ENCODE measurements at regions of chr3 and their contacts with region 1.

Region 1: DNA sequence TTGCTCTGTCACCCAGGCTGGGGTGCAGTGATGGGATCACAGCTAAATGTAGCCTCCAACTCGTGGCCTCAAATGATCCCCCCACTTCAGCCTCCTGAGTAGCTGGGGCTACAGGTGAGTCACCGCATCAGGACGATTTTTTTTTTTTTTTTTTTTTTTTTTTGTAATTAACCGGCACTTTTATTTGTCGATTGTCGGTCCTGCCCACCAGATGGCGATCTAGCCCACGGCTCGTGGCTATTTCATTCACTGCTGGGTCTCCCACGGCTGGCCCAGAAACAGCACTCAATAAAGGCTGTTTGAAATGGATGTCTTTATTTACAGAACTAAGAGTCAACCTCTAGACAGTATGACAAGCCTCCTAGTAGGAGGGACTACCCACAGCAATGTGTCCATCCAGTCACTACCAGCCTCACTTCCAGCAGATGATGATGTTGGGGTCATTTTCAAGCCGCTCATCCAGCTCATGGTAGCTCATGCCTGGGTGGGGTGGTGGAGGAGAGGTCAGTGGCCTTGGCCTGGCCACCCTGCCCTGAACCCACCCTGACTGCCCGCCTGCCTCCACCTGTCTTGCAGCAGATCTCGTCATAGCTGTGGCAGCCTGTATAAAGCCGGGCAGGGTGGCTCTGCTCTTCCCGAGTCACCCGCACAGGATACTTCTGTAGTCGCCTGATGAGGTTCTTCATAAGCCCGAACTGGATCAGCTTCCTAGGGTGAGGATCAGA is 1.8 kb upstream of the ZMYND10 start:
- DNase-seq: peak; percentile 71
- ATAC-seq: 0 out of 2 replicates have a peak, but pooled peaks have one; percentile 8
- H3K4me3 ChIP-seq: no peak overlapping the region
- H3K27ac ChIP-seq: no peak overlapping the region
- H3K4me1 ChIP-seq: peaks cover 11% of the 10 kb centered on the region
- H3K27me3 ChIP-seq: no peaks in the 10 kb centered on the region
- CTCF ChIP-seq: peak; percentile 79
- POLR2A ChIP-seq: 0 out of 2 replicates have a peak, but pooled peaks have one; percentile 43
- RAD21 ChIP-seq: peak; percentile 85

Region 2: DNA sequence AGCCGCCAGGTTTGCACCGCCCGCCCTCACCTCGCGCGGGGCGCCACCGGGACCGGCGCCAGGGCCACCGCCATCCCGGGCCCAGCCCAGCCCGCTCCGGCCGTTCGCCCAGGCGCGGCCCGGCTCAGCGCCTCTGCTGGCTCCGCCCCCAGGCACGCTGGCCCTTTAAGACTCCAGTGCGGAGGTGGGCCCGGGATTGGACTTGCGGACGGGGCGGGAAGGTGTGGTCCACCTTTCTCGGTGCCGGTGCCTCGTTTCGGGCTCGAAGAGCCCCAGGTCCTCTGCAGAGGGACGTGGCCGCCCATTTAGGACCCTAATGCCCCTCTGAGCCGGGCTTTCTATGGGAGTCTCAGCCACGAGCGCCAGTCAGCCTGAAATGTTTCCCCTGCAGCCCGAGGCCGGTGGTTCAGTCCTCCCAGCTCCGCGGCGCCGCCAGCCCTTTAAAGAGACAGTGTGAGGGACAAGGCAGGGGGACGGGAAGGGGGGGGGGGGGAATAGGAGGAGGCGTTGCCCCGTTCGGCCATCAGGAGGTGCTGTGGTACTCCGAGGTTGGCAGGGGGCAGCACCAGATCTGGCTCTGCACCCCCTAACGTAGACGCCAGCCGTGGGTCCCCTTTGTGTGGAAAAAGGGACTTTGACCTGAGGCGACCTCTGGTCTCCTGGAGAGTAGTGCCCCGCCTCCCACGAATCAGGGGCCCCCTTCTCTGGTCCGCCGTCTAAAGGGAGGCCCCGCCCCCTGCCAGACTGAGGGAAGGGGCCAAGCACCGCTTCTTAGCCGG is 25.8 kb before region 1 on chr3:
- CTCF ChIA-PET with region 1: no interaction called
- POLR2A ChIA-PET with region 1: interaction called, 10 read pairs
- dilution Hi-C with region 1: no loop called
- in situ Hi-C with region 1: no loop called
- intact Hi-C with region 1: no loop called
- DNase-seq: peak; percentile 83
- ATAC-seq: peak; percentile 90
- H3K4me3 ChIP-seq: peak overlapping the region; percentile 58
- H3K27ac ChIP-seq: peak overlapping the region; percentile 98
- H3K4me1 ChIP-seq: peaks cover 25% of the 10 kb centered on the region
- H3K27me3 ChIP-seq: no peaks in the 10 kb centered on the region
- CTCF ChIP-seq: peak; percentile 42
- POLR2A ChIP-seq: peak; percentile 80
- RAD21 ChIP-seq: no peak

Region 3: DNA sequence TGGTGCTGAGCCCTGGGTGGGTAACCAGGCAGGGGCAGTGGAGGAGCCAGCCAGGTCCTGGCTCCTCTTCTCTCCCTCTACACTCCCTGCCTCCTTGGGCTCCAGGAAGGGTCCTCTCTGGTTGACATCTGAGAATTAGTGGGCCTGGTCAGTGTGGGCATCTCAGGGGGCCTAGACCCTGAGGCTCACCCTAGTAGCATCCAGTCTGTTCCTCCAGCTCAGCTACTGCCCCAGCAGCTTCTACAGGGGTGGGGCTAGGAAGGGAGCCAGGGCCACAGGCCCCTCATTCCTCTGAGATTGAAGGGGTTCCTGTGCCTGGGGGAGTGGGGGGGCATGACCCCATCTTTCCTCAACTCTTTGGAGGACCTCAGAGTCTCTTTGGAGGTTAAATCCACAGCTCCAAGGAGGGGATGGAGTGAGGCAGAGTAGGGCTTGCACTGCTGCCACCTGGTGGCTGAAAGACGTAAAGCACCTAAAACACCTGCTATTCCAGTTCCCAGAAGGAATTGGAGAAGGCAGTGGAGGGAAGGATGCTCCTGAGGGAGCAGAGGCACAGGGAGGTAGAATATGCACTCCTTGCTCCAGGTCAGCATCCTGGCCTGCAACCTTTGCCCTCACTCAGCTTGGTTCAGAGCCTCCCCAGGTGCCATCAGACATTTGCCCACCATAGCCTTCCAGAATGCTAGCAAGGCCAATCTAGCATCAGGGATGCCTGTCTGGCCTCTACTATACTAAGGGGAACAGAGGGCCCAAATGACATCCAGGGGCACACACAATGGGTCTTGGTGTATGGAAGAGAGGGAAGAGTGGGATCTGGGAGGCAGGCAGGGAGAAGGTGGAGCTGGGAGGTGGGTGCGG is 195.1 kb after region 1 on chr3:
- CTCF ChIA-PET with region 1: interaction called, 5 read pairs
- POLR2A ChIA-PET with region 1: no interaction called
- dilution Hi-C with region 1: no loop called
- in situ Hi-C with region 1: loop called (anchors 5 kb)
- intact Hi-C with region 1: loop called (anchors 1 kb)
- DNase-seq: peak; percentile 52
- ATAC-seq: peak; percentile 91
- H3K4me3 ChIP-seq: no peak overlapping the region
- H3K27ac ChIP-seq: no peak overlapping the region
- H3K4me1 ChIP-seq: no peaks in the 10 kb centered on the region
- H3K27me3 ChIP-seq: peaks cover 40% of the 10 kb centered on the region
- CTCF ChIP-seq: peak; percentile 81
- POLR2A ChIP-seq: no peak
- RAD21 ChIP-seq: peak; percentile 80

Region 4: DNA sequence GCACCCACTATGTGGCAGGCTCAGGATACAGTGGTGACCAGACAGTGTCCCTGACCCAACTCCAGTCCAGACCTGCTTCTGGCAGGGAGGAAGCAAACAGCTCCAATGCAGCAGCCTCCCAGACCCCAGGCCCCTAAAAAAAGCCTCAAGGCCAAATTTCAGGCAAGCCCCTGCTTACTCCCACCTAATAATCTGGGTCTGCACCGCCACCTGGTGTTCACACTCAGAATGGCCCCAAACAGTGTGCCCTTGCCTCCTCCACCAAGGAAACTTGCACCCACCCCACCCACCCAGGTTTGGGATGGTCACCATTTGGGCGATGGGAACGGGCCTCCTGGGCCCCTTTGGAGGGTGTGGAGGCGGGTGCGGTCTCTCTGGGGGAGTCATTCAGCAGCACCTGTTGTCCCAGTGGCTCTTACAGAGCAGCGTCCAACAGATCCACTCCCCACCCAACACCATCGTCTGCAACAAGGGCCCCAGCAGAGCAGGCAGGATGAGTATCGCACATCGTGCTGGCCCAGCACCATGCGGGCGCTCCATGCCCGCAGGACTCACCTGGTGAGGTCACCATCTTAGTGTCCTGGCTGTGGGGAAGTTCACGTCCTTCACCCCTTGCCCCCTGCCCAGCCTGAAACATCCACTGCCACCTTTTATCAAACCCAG is 202.9 kb after region 1 on chr3:
- CTCF ChIA-PET with region 1: no interaction called
- POLR2A ChIA-PET with region 1: no interaction called
- dilution Hi-C with region 1: no loop called
- in situ Hi-C with region 1: loop called (anchors 5 kb)
- intact Hi-C with region 1: loop called (anchors 2 kb)
- DNase-seq: peak; percentile 20
- ATAC-seq: peak; percentile 87
- H3K4me3 ChIP-seq: no peak overlapping the region
- H3K27ac ChIP-seq: no peak overlapping the region
- H3K4me1 ChIP-seq: no peaks in the 10 kb centered on the region
- H3K27me3 ChIP-seq: peaks cover 37% of the 10 kb centered on the region
- CTCF ChIP-seq: peak; percentile 62
- POLR2A ChIP-seq: no peak
- RAD21 ChIP-seq: peak; percentile 56

Region 5: GRCh38 chr3:50639055-50639494 is 291.7 kb after region 1 on chr3:
- CTCF ChIA-PET with region 1: no interaction called
- POLR2A ChIA-PET with region 1: no interaction called
- dilution Hi-C with region 1: no loop called
- in situ Hi-C with region 1: no loop called
- intact Hi-C with region 1: no loop called
- DNase-seq: peak; percentile 76
- ATAC-seq: peak; percentile 94
- H3K4me3 ChIP-seq: no peak overlapping the region
- H3K27ac ChIP-seq: no peak overlapping the region
- H3K4me1 ChIP-seq: peaks cover 6% of the 10 kb centered on the region
- H3K27me3 ChIP-seq: no peaks in the 10 kb centered on the region
- CTCF ChIP-seq: no peak
- POLR2A ChIP-seq: no peak
- RAD21 ChIP-seq: no peak